ENCODE measurements at regions of chr3 and their contacts with region 1.

Region 1: GRCh38 chr3:32374788-32375595 is 16.7 kb upstream of the CMTM7 start:
- DNase-seq: peak; percentile 80
- ATAC-seq: peak; percentile 85
- H3K4me3 Mint-ChIP-seq: no peak overlapping the region
- H3K27ac Mint-ChIP-seq: peak overlapping the region; percentile 22
- H3K4me1 Mint-ChIP-seq: peaks cover 23% of the 10 kb centered on the region
- H3K27me3 Mint-ChIP-seq: peaks cover 3% of the 10 kb centered on the region

Region 2: GRCh38 chr3:32283304-32283703 is 91.7 kb before region 1 on chr3:
- CTCF ChIA-PET with region 1: no interaction called
- DNase-seq: no peak
- ATAC-seq: no peak
- H3K4me3 Mint-ChIP-seq: no peak overlapping the region
- H3K27ac Mint-ChIP-seq: no peak overlapping the region
- H3K4me1 Mint-ChIP-seq: peaks cover 21% of the 10 kb centered on the region
- H3K27me3 Mint-ChIP-seq: peaks cover 3% of the 10 kb centered on the region

Region 3: DNA sequence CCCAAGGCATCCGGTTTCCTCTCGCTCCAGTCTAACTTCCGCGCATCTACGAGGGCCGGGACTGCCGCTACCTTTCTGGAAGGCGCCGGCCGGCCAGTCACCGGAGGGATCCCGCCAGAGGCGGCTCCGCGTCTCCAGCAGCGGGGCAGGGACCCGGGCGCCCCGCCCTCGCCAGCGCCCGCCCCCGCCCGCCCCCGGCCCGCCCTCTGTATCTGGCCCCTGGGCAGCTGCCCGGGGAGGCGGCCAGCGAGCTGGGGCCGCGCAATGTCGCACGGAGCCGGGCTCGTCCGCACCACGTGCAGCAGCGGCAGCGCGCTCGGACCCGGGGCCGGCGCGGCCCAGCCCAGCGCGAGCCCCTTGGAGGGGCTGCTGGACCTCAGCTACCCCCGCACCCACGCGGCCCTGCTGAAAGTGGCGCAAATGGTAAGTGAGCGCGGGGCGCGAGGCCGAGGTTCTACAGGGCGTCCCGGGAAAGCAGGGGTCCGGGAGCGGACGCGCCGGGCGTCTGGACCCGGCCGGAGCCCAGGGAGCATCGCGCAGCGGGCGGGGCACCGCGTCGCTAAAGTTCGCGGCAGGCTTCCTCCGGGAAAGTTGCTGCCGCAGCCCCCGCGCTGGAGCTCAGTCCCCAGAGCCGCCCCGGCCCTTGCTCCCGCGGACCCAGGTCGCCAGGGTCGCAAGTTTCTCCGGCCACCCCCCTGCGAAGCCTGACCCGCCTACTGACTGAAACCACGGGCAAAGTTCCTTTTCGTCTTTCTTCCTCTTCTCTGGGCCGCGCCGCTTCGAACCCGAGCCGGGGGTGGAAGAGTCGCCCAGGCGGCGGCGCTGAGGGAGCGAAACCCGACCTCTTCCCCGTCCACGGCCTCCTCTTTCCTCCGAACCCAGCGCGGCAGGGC is 16.9 kb after region 1 on chr3 and contains the start of gene CMTM7:
- CTCF ChIA-PET with region 1: interaction called, 36 read pairs
- DNase-seq: peak; percentile 80
- ATAC-seq: peak; percentile 83
- H3K4me3 Mint-ChIP-seq: peak within 1 kb of the TSS; percentile 95
- H3K27ac Mint-ChIP-seq: peak within 1 kb of the TSS; percentile 93
- H3K4me1 Mint-ChIP-seq: peaks cover 55% of the 10 kb centered on the region
- H3K27me3 Mint-ChIP-seq: no peaks in the 10 kb centered on the region
- total RNA-seq, gene CMTM7: 42.6 to 49.8 TPM

Region 4: GRCh38 chr3:32401556-32402081 is 26.6 kb after region 1 on chr3:
- CTCF ChIA-PET with region 1: interaction called, 18 read pairs
- DNase-seq: peak; percentile 81
- ATAC-seq: peak; percentile 87
- H3K4me3 Mint-ChIP-seq: peak overlapping the region; percentile 76
- H3K27ac Mint-ChIP-seq: peak overlapping the region; percentile 93
- H3K4me1 Mint-ChIP-seq: peaks cover 65% of the 10 kb centered on the region
- H3K27me3 Mint-ChIP-seq: no peaks in the 10 kb centered on the region

Region 5: GRCh38 chr3:32420126-32421038 is 45.4 kb after region 1 on chr3:
- CTCF ChIA-PET with region 1: interaction called, 13 read pairs
- DNase-seq: peak; percentile 65
- ATAC-seq: peak; percentile 51
- H3K4me3 Mint-ChIP-seq: peak overlapping the region; percentile 52
- H3K27ac Mint-ChIP-seq: peak overlapping the region; percentile 92
- H3K4me1 Mint-ChIP-seq: peaks cover 87% of the 10 kb centered on the region
- H3K27me3 Mint-ChIP-seq: no peaks in the 10 kb centered on the region

Measured in activated CD8-positive, alpha-beta memory T cell treated with anti-CD3 and anti-CD28 coated beads, Interleukin-2, amount 10 ng/mL, durations not matched to agents 7 days and 5 days (primary cell).